Activated CD4-positive, alpha-beta T cell treated with anti-CD3 and anti-CD28 coated beads for 36 hours (primary cell): ENCODE measurements at regions of chr1 and their contacts with region 1.

Region 1: GRCh38 chr1:24930204-24931145 is at the start of gene RUNX3:
- DNase-seq: peak; percentile 96
- ATAC-seq: peak; percentile 88
- H3K4me3 Mint-ChIP-seq: peak within 1 kb of the TSS; percentile 80
- H3K27ac Mint-ChIP-seq: peak within 1 kb of the TSS; percentile 91
- H3K4me1 Mint-ChIP-seq: peaks cover 66% of the 10 kb centered on the region
- H3K27me3 Mint-ChIP-seq: no peaks in the 10 kb centered on the region
- total RNA-seq, gene RUNX3: 156 to 167 TPM

Region 2: GRCh38 chr1:24648919-24649318 is 281.6 kb before region 1 on chr1:
- CTCF ChIA-PET with region 1: no interaction called
- POLR2A ChIA-PET with region 1: no interaction called
- intact Hi-C with region 1: no loop called
- DNase-seq: no peak
- ATAC-seq: peak; percentile 53
- H3K4me3 Mint-ChIP-seq: no peak overlapping the region
- H3K27ac Mint-ChIP-seq: peak overlapping the region; percentile 65
- H3K4me1 Mint-ChIP-seq: peaks cover 63% of the 10 kb centered on the region
- H3K27me3 Mint-ChIP-seq: no peaks in the 10 kb centered on the region

Region 3: DNA sequence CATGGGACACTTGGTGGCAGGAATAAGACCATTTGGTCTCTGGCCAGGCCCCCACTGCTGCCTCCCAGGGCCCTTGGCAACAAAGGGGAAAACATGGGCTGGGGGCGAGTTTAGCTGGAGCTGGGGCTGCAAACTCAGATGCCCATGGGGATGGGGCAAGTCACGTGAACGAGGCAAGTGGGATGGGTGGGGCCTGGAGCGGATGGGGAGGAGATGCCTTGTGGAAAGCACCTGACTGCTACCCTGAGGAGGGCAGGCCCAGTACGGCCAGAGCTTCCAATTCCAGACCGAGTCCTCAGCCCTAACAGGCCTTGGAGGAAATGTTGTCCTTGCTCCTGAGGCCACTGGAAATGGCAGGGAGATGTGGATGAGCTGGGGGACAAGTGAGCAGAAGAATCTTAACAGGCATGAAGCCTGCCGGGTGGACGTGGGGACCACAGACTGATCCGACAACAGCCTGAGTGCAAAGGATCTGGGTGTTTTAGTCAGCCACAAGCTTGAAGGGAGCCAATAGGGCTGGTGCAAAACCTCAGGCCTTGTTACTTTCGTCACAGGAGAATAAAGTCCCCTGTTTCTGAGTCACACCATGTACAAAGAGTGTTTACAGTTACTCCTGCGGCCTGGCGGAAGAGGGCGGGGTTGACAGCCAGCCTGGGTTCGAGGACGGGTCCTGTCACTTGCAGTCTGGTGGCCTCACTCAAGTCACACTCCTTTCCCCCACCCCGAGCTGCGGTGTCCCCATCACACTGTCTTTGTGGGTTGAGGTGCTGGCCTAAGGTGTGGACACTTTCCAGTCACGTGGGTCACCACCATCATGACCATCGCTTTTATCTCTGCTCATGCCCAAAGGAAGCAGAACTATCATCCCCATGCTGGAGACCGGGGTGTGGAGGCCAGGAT is 19.5 kb before region 1 on chr1:
- CTCF ChIA-PET with region 1: interaction called, 3 read pairs
- POLR2A ChIA-PET with region 1: interaction called, 5 read pairs
- intact Hi-C with region 1: loop called in 1 of 2 experiments (anchors 1 kb)
- DNase-seq: peak; percentile 78
- ATAC-seq: peak; percentile 80
- H3K4me3 Mint-ChIP-seq: peak overlapping the region; percentile 10
- H3K27ac Mint-ChIP-seq: peak overlapping the region; percentile 56
- H3K4me1 Mint-ChIP-seq: peaks cover 45% of the 10 kb centered on the region
- H3K27me3 Mint-ChIP-seq: no peaks in the 10 kb centered on the region

Region 4: DNA sequence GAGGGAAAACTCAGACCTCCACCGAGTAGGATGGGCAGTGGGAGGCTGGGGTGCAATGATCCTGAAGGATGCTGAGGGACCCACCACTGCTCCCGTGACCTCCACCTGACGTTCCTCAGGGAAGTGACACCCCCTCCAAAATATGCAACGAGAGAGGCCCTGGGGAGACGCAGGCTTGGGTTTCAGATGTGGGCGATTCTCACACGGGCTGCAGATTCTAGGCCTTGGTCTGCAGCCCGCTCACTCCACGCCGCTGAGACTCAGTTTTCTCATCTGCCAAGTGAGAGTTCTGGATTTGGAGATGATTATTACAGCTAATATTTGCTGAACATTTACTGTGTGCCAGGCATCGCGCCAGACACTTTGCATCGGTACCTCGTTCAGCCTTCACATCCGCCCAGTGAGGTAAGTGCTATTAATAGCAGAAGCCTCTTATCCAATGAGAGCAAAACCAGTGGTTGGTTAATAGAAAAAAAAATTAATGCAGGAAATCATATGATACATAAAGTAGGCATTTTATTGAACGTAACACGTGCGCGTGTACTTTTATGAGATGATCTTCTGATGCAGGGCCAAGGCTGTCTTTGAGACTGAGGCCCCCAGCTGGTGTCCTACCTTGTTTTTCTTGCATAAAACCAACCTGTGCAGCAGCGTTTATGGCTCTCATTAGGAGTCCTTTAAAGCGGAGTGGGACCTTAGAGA is 101.6 kb after region 1 on chr1:
- CTCF ChIA-PET with region 1: interaction called, 109 read pairs
- POLR2A ChIA-PET with region 1: interaction called, 4 read pairs
- intact Hi-C with region 1: loop called (anchors 1 kb)
- DNase-seq: peak; percentile 70
- ATAC-seq: peak; percentile 25
- H3K4me3 Mint-ChIP-seq: no peak overlapping the region
- H3K27ac Mint-ChIP-seq: no peak overlapping the region
- H3K4me1 Mint-ChIP-seq: peaks cover 74% of the 10 kb centered on the region
- H3K27me3 Mint-ChIP-seq: no peaks in the 10 kb centered on the region

Region 5: GRCh38 chr1:25037174-25038074 is 106.9 kb after region 1 on chr1:
- CTCF ChIA-PET with region 1: interaction called, 109 read pairs
- POLR2A ChIA-PET with region 1: interaction called, 4 read pairs
- intact Hi-C with region 1: loop called (anchors 1 kb)
- DNase-seq: peak; percentile 86
- ATAC-seq: peak; percentile 55
- H3K4me3 Mint-ChIP-seq: no peak overlapping the region
- H3K27ac Mint-ChIP-seq: peak overlapping the region; percentile 27
- H3K4me1 Mint-ChIP-seq: peaks cover 35% of the 10 kb centered on the region
- H3K27me3 Mint-ChIP-seq: no peaks in the 10 kb centered on the region

Region 6: GRCh38 chr1:25099343-25099951 is 169.0 kb after region 1 on chr1:
- CTCF ChIA-PET with region 1: interaction called, 19 read pairs
- POLR2A ChIA-PET with region 1: interaction called, 4 read pairs
- intact Hi-C with region 1: loop called (anchors 2 to 5 kb)
- DNase-seq: peak; percentile 52
- ATAC-seq: peak; percentile 54
- H3K4me3 Mint-ChIP-seq: no peak overlapping the region
- H3K27ac Mint-ChIP-seq: peak overlapping the region; percentile 62
- H3K4me1 Mint-ChIP-seq: peaks cover 58% of the 10 kb centered on the region
- H3K27me3 Mint-ChIP-seq: no peaks in the 10 kb centered on the region

Region 7: GRCh38 chr1:25247024-25247828 is 316.8 kb after region 1 on chr1 and contains the start of gene RSRP1:
- CTCF ChIA-PET with region 1: no interaction called
- POLR2A ChIA-PET with region 1: no interaction called
- intact Hi-C with region 1: loop called in 1 of 2 experiments (anchors 5 kb)
- DNase-seq: peak; percentile 100
- ATAC-seq: peak; percentile 90
- H3K4me3 Mint-ChIP-seq: peak within 1 kb of the TSS; percentile 96
- H3K27ac Mint-ChIP-seq: peak within 1 kb of the TSS; percentile 99
- H3K4me1 Mint-ChIP-seq: peaks cover 40% of the 10 kb centered on the region
- H3K27me3 Mint-ChIP-seq: no peaks in the 10 kb centered on the region
- total RNA-seq, gene RSRP1: 86.8 to 120 TPM